Caco-2 (cell line): ENCODE measurements at regions of chr18 and their contacts with region 1.

Region 1: DNA sequence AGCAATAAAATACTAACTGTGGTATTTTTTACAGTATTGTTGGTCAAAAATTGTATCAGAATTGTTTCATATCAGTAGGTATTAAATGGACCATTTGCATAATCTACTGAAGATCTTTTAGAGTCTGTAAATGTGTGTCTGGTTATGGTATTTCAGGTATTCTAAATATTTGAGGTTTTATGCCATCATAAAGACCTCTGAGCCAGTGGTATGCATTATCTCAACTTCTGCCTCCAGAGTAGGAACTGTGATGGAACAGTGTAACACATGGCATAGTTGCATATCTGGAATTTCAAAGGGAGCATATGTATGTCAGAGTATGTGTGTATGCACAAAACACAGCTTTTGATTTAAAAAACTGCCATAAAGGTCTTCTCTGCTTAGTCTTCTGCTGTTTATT is 15.4 kb downstream of the GREB1L start:
- DNase-seq: peak in 1 of 2 experiments; percentile 50
- H3K4me3 ChIP-seq: no peak overlapping the region
- H3K4me3 Mint-ChIP-seq: peak overlapping the region; percentile 48
- H3K27ac Mint-ChIP-seq: peak overlapping the region; percentile 80
- H3K4me1 ChIP-seq: peaks cover 80% of the 10 kb centered on the region
- H3K4me1 Mint-ChIP-seq: peaks cover 26% of the 10 kb centered on the region
- H3K27me3 ChIP-seq: no peaks in the 10 kb centered on the region
- H3K27me3 Mint-ChIP-seq: no peaks in the 10 kb centered on the region
- CTCF ChIP-seq: no peak

Region 2: GRCh38 chr18:21303913-21304312 is 46.5 kb after region 1 on chr18:
- CTCF ChIA-PET with region 1: no interaction called
- POLR2A ChIA-PET with region 1: no interaction called
- intact Hi-C with region 1: loop called (anchors 5 kb)
- DNase-seq: no peak
- H3K4me3 ChIP-seq: no peak overlapping the region
- H3K4me3 Mint-ChIP-seq: no peak overlapping the region
- H3K27ac Mint-ChIP-seq: peak overlapping the region; percentile 68
- H3K4me1 ChIP-seq: peaks cover 85% of the 10 kb centered on the region
- H3K4me1 Mint-ChIP-seq: peaks cover 58% of the 10 kb centered on the region
- H3K27me3 ChIP-seq: no peaks in the 10 kb centered on the region
- H3K27me3 Mint-ChIP-seq: no peaks in the 10 kb centered on the region
- CTCF ChIP-seq: no peak

Region 3: DNA sequence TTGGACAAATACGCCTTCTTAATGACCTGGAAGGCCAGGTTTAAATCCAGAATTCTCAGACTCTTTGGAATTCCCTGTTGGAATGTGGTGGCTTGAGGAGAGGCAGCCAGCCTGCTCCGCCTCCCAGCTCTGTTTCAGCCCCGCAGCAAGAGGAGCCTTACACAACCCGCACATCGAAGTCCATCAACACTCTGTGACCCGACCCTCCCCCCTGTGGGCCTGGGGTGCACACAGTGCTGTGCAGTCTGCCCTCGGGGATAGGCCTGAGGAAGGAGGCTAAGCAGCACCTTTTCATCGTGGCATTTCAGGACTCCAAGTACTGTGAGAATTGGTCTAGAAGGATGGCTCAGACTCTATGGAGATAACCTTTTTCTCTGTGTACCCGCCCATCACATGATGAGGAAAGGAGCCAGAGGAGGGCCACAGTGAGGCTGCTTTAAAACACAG is 58.4 kb after region 1 on chr18:
- CTCF ChIA-PET with region 1: no interaction called
- POLR2A ChIA-PET with region 1: no interaction called
- intact Hi-C with region 1: loop called (anchors 5 kb)
- DNase-seq: peak; percentile 96 to 97
- H3K4me3 ChIP-seq: peak overlapping the region; percentile 25; the same call in 1 of the 2 replicates
- H3K4me3 Mint-ChIP-seq: peak overlapping the region; percentile 69
- H3K27ac Mint-ChIP-seq: peak overlapping the region; percentile 96
- H3K4me1 ChIP-seq: peaks cover 44% of the 10 kb centered on the region
- H3K4me1 Mint-ChIP-seq: peaks cover 36% of the 10 kb centered on the region
- H3K27me3 ChIP-seq: no peaks in the 10 kb centered on the region
- H3K27me3 Mint-ChIP-seq: no peaks in the 10 kb centered on the region
- CTCF ChIP-seq: peak in 1 of 2 experiments; percentile 19